HEK293 (cell line): ENCODE measurements at regions of chr16 and their contacts with region 1.

Region 1: GRCh38 chr16:24253192-24253591 is 2.9 kb upstream of the CACNG3 start:
- H3K4me3 ChIP-seq: no peak overlapping the region
- H3K27ac ChIP-seq: no peak overlapping the region
- H3K4me1 ChIP-seq: no peaks in the 10 kb centered on the region; the same call in 1 of the 2 replicates
- CTCF ChIP-seq: no peak

Region 2: DNA sequence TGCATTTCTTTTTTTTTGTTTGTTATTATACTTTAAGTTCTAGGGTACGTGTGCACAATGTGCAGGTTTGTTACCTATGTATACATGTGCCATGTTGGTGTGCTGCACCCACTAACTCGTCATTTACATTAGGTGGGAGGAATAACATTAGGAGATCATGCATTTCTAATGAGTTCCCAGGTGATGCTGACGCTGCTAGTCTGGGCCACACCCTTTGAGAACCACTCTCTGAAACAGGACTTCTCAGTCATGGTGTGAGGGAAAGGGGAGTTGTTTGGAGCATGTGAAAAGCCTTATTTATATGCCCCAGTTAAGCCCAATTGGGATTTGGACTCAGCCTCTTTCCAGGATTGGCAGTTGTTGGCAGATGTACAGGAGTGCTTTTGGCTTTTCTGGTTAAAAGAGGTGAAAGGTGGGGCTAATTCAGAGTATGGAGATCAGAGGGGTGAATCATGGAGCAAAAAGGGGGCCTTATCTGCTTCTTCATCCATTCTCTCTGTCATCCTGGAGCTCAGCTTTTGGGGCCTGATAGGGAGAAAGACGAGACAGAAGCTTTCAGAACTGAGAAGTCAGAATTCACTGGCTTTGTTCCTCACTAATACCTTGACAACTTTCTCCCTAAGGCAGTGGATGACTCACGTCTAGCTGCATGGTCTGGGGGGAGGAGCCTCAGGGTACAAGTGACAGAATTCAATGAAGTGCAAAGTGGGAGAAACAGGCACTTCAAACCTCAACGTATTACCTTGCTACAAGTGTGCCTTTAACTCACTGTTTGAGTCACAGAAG is 177.1 kb before region 1 on chr16:
- CTCF ChIA-PET with region 1: interaction called, 72 read pairs
- POLR2A ChIA-PET with region 1: no interaction called
- H3K4me3 ChIP-seq: no peak overlapping the region
- H3K27ac ChIP-seq: no peak overlapping the region
- H3K4me1 ChIP-seq: no peaks in the 10 kb centered on the region
- CTCF ChIP-seq: no peak

Region 3: DNA sequence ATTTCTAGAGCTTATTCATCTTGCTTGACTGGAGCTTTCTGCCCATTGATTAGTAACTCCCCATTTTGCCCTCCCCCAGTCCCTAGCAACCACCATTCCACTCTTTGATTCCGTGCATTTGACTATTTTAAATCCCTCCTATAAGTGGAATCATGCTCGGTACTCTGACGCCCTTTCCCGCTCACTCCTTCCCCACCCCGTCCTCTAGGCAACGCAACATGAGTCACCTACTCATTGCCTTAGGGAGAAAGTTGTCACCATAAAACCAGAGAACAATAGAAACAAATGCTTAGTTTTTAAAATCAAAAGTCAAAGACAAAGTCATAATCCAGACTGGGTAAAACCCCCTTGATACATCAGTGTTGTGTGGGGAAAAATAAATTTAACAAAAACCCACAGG is 240.7 kb after region 1 on chr16:
- CTCF ChIA-PET with region 1: interaction called, 10 read pairs
- POLR2A ChIA-PET with region 1: no interaction called
- H3K4me3 ChIP-seq: no peak overlapping the region
- H3K27ac ChIP-seq: no peak overlapping the region
- H3K4me1 ChIP-seq: no peaks in the 10 kb centered on the region; the same call in 1 of the 2 replicates
- CTCF ChIP-seq: no peak